HEK293 (cell line): ENCODE measurements at regions of chr2 and their contacts with region 1.

Region 1: DNA sequence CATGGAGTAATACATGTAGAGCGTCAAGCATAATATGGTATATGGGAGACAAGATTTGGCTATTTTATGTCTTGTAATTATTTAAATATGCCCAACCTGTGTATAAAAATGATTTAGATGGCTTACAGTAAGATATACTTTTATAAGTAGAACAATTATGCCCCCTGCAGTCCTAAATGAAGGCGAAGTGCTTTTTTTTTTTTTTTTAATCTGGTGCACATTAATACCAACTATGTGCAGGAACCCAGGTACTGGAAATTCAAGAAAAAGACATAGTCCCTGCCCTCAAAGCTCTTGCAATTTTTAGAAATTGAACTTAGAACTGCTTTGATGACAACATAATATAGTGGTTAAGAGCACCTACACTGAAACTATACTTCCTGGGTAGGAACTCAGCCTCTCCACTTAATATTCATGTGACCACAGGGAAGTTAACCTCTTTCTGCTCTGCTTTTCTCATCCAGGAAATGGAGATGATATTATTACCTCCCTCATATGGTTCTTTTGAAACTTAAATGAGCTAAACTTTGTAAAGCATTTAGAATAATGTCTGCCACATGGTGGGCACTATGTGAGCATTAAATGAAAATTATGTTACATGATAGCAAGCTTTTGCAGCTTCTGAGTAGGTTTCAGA is 38.1 kb downstream of the AFTPH start:
- H3K4me3 ChIP-seq: no peak overlapping the region
- H3K27ac ChIP-seq: no peak overlapping the region
- H3K4me1 ChIP-seq: peaks cover 21% of the 10 kb centered on the region
- CTCF ChIP-seq: no peak

Region 2: DNA sequence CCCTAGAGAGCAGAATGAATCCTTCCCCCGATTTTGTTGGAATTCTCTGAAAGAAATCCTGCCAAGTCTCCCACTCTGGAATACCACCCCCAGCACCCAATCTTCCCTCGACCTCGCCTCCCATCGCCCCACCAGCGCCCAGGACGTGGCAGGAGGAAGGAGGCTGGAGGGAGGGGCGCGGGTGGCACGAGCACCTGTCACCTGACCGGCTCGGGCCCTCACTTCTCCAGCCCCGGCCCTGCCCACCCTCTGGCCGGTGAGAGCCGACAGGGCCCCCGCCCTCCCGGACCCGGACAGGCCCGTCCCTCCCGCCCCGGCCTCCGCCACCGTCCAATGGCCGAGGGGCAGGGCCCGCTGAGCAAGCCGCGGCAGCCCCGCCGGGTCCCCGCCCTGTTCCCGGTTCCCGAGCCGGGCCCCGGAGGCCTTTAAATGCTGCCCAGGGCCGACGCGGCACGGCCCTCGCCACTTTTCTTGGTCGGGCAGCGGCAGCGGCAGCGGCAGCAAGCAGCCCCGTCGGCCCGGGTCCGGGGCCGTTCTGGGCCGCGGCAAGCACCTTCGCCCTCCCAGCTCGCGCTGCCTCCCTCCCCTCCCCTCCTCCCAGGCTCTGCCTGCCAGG is 108.4 kb before region 1 on chr2 and contains the start of gene LGALSL:
- CTCF ChIA-PET with region 1: no interaction called
- POLR2A ChIA-PET with region 1: no interaction called
- H3K4me3 ChIP-seq: peak within 1 kb of the TSS; percentile 77
- H3K27ac ChIP-seq: peak within 1 kb of the TSS; percentile 84
- H3K4me1 ChIP-seq: peaks cover 10% of the 10 kb centered on the region; the same call in 1 of the 2 replicates
- CTCF ChIP-seq: no peak

Region 3: GRCh38 chr2:64523666-64524603 is 38.3 kb before region 1 on chr2 and contains the start of gene AFTPH:
- CTCF ChIA-PET with region 1: interaction called, 26 read pairs
- POLR2A ChIA-PET with region 1: interaction called, 3 read pairs
- H3K4me3 ChIP-seq: peak within 1 kb of the TSS; percentile 99
- H3K27ac ChIP-seq: peak within 1 kb of the TSS; percentile 80
- H3K4me1 ChIP-seq: no peaks in the 10 kb centered on the region; the same call in 1 of the 2 replicates
- CTCF ChIP-seq: peak; percentile 39

Region 4: DNA sequence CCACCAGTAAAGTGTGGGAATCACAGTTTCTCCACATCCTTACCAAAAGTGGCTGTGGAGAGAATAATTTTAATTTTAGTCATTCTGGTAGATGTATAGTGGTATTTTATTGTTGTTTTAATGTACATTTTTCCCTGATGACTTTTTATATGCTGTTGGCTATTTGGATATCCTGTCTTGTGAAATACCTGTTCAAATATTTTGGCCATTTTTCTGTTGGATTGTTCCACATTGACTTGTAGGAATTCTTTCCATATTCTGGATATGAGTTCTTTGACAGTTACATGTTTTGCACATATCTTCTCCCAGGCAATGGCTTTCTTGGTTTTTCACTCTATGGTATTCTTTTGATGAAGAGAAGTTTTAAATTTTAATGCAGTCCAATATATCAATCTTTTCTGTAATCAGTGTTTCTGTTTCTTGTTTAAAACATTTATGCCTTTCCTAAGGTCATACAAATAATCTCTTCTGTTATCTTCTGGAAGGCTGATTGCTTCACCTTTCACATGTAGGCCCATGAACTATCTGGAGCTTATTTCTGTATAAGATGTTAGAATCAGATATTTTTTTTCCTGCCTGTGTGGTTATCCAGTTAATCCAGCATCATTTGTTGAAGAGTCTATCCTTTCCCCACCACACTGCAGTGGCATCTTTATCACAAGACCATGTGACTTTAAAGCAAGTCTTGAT is 19.1 kb before region 1 on chr2:
- CTCF ChIA-PET with region 1: no interaction called
- POLR2A ChIA-PET with region 1: no interaction called
- H3K4me3 ChIP-seq: no peak overlapping the region
- H3K27ac ChIP-seq: no peak overlapping the region
- H3K4me1 ChIP-seq: peaks cover 5% of the 10 kb centered on the region; the same call in 1 of the 2 replicates
- CTCF ChIP-seq: no peak